ENCODE measurements at regions of chr6 and their contacts with region 1.

Region 1: DNA sequence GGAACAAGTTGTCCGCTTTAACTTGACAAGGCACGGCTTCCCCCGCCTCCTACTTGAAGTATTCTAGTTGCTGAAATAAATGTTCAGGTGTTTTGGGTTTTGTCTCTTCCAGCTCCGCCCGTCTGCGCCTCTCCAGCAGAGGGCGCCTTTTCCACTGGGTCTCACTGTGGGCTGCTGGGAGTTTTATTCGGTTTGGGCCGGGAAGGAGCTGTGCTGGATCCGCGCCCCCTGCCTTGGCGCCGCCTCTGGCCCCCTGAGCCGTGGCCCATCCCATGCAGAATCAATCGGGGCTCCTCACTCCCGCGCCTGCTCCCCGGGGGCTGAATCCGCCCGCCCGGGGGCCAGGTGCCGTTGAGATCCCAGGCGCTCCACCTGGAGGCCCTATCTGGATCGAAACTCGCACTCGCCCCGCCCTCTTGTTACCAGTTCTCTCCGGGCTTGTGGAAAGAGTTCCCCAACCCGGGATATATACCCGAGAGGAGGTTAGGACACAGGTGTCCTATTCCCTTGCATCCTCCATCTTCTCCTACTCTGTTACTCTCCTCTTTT is 51.0 kb upstream of the TCF21 start:
- DNase-seq: peak; percentile 33
- H3K4me3 ChIP-seq: peak overlapping the region; percentile 31
- H3K27ac ChIP-seq: no peak overlapping the region
- H3K4me1 ChIP-seq: no peaks in the 10 kb centered on the region
- H3K27me3 ChIP-seq: no peaks in the 10 kb centered on the region
- CTCF ChIP-seq: peak; percentile 38 to 74 (median 62)
- POLR2A ChIP-seq: no peak

Region 2: GRCh38 chr6:133568970-133569889 is 268.6 kb before region 1 on chr6:
- intact Hi-C with region 1: loop called (anchors 5 kb)
- DNase-seq: no peak
- H3K4me3 ChIP-seq: peak overlapping the region in 1 of 2 donors; percentile 7
- H3K27ac ChIP-seq: no peak overlapping the region
- H3K4me1 ChIP-seq: no peaks in the 10 kb centered on the region
- H3K27me3 ChIP-seq: no peaks in the 10 kb centered on the region
- CTCF ChIP-seq: peak; percentile 55 to 94 (median 84)
- POLR2A ChIP-seq: no peak

Region 3: DNA sequence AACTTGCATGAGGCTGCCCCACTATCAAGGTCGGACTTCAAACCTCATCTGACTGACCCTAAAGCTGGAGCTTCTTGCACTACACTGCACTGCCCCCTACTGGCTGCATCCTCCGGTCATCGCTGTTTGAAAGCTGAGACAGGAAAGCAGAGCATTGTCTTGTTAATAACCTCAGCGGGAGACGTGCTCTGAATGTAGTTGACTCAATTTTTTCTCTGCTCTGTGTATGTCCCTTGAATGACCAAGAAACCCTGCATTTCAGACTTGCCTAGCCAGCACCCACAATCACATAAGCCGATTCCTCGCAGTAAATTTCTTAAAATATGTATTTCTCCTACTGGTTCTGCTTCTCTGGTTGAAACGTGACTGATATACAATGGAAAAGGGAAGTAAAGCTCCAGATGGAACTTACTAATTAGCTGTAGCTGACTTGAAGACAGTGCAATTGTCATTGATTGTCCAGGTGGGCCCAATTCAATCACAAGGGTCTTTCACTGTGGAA is 78.8 kb after region 1 on chr6:
- intact Hi-C with region 1: loop called (anchors 5 kb)
- DNase-seq: peak; percentile 80
- H3K4me3 ChIP-seq: no peak overlapping the region
- H3K27ac ChIP-seq: no peak overlapping the region
- H3K4me1 ChIP-seq: no peaks in the 10 kb centered on the region
- H3K27me3 ChIP-seq: no peaks in the 10 kb centered on the region
- CTCF ChIP-seq: peak; percentile 26 to 79 (median 72)
- POLR2A ChIP-seq: no peak

Region 4: GRCh38 chr6:133945158-133945557 is 107.3 kb after region 1 on chr6:
- intact Hi-C with region 1: no loop called
- DNase-seq: no peak
- H3K4me3 ChIP-seq: no peak overlapping the region
- H3K27ac ChIP-seq: no peak overlapping the region
- H3K4me1 ChIP-seq: no peaks in the 10 kb centered on the region
- H3K27me3 ChIP-seq: no peaks in the 10 kb centered on the region
- CTCF ChIP-seq: no peak
- POLR2A ChIP-seq: no peak

Region 5: GRCh38 chr6:134002821-134003220 is 164.9 kb after region 1 on chr6:
- intact Hi-C with region 1: no loop called
- DNase-seq: no peak
- H3K4me3 ChIP-seq: no peak overlapping the region
- H3K27ac ChIP-seq: peak overlapping the region; percentile 62 to 70
- H3K4me1 ChIP-seq: peaks cover 6% of the 10 kb centered on the region
- H3K27me3 ChIP-seq: no peaks in the 10 kb centered on the region
- CTCF ChIP-seq: no peak
- POLR2A ChIP-seq: no peak